ENCODE measurements at regions of chr11 and their contacts with region 1.

Region 1: DNA sequence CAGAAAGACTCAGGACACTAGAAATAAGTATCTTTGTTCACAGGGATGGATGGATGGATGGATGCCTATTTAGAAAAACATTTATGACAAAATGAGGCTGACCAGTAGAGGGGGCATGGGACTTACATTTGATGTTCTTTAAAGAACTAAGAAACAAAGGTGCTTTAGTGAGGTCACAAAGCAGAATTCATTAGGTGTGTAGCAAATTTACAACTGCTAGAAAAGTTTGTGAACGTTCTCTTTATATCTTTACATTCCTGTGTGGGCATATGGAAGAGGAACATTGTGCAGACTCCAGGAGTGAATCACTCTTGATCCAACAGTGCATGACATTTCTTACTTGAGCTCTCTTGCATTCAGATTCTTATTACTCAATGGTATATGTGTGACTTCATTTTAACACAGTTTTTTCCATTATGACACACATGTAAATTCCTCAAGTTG is 15.8 kb upstream of the SIK2 start:
- DNase-seq: no peak
- H3K4me3 ChIP-seq: no peak overlapping the region
- H3K27ac ChIP-seq: no peak overlapping the region
- H3K4me1 ChIP-seq: peaks cover 3% of the 10 kb centered on the region
- H3K27me3 ChIP-seq: no peaks in the 10 kb centered on the region
- CTCF ChIP-seq: peak; percentile 66

Region 2: DNA sequence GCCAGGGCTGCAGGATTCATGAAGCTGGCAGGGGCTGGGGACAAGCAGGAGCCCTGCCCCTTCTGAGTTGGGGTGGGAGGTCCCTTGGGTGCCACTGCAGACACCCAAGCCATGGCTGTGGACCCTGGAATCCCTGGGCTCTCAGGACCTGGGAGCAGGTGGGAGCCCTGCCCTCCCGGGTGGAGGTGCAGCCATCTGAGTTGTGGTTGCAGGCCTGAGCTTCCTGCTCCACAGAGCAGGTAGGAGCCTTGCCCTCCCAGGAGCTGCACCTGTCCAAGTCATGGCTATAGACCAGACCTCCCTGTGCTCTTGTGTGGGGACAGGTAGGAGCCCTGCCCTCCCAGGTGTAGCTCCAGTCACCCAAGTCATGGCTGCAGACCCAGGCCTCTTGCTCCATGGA is 987.7 kb before region 1 on chr11:
- intact Hi-C with region 1: no loop called
- DNase-seq: no peak
- H3K4me3 ChIP-seq: no peak overlapping the region
- H3K27ac ChIP-seq: no peak overlapping the region
- H3K4me1 ChIP-seq: no peaks in the 10 kb centered on the region
- H3K27me3 ChIP-seq: no peaks in the 10 kb centered on the region
- CTCF ChIP-seq: no peak

Region 3: GRCh38 chr11:111841370-111842053 is 255.1 kb after region 1 on chr11:
- intact Hi-C with region 1: loop called (anchors 5 kb)
- DNase-seq: peak; percentile 86
- H3K4me3 ChIP-seq: no peak overlapping the region
- H3K27ac ChIP-seq: no peak overlapping the region
- H3K4me1 ChIP-seq: peaks cover 12% of the 10 kb centered on the region
- H3K27me3 ChIP-seq: no peaks in the 10 kb centered on the region
- CTCF ChIP-seq: peak; percentile 93

Measured in left ventricle myocardium inferior (tissue), 1 donor.